Spleen (tissue), 13 donors: ENCODE measurements at regions of chr9 and their contacts with region 1.

Region 1: GRCh38 chr9:3436629-3437420 is 89.0 kb downstream of the RFX3 start:
- DNase-seq: no peak
- H3K4me3 ChIP-seq: no peak overlapping the region
- H3K27ac ChIP-seq: no peak overlapping the region
- H3K4me1 ChIP-seq: peaks cover 0 to 28% (median 4%) of the 10 kb centered on the region in 6 donors
- H3K27me3 ChIP-seq: no peaks in the 10 kb centered on the region
- CTCF ChIP-seq: no peak
- POLR2A ChIP-seq: no peak

Region 2: GRCh38 chr9:3240656-3241268 is 196.1 kb before region 1 on chr9:
- intact Hi-C with region 1: loop called (anchors 5 kb)
- DNase-seq: peak; percentile 85
- H3K4me3 ChIP-seq: no peak overlapping the region
- H3K27ac ChIP-seq: no peak overlapping the region
- H3K4me1 ChIP-seq: peaks cover 0 to 35% (median 8%) of the 10 kb centered on the region in 6 donors
- H3K27me3 ChIP-seq: no peaks in the 10 kb centered on the region
- CTCF ChIP-seq: peak; percentile 35 to 86 (median 76)
- POLR2A ChIP-seq: no peak